Heart right ventricle (tissue), 16 donors: ENCODE measurements at regions of chr16 and their contacts with region 1.

Region 1: DNA sequence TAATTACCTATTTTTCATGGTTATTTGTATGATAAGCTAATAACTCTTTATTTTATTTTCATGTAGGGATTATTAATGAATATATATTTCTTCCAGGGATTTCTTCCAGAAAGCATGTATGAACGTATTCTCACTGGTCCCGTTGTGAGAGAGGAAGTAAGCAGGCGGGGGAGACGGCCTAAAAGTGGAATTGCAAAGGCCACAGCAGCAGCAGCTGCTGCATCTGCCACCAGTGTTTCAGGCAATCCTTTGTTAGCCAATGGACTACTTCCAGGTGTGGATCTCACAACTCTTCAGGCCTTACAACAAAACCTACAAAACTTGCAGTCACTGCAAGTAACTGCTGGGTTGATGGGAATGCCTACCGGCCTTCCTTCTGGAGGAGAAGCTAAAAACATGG is 110.3 kb upstream of the RBL2 start:
- DNase-seq: no peak
- ATAC-seq: no peak
- H3K4me3 ChIP-seq: no peak overlapping the region
- H3K27ac ChIP-seq: no peak overlapping the region
- H3K4me1 ChIP-seq: no peaks in the 10 kb centered on the region
- H3K27me3 ChIP-seq: no peaks in the 10 kb centered on the region
- CTCF ChIP-seq: no peak

Region 2: DNA sequence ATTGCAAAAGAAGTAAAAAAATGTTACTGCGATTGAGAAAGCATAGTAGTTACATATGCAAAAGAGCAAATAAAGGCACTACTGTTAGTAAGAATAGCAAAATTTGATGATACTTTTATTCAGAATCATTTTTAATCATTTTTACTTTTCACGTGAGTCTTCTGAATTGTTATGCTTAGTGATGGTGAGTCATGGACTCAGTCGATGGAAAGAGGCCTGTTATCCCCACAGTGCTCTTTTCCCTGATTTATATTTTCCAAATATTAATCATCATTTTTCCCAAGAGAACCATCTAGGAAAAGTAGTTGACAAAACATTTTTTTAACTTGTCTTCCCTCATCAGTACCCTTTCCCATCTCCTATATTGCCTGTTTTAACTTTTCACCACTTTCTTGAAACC is 88.1 kb before region 1 on chr16:
- intact Hi-C with region 1: loop called in 1 of 10 experiments (anchors 5 kb)
- DNase-seq: no peak
- ATAC-seq: no peak
- H3K4me3 ChIP-seq: no peak overlapping the region
- H3K27ac ChIP-seq: no peak overlapping the region
- H3K4me1 ChIP-seq: no peaks in the 10 kb centered on the region
- H3K27me3 ChIP-seq: no peaks in the 10 kb centered on the region
- CTCF ChIP-seq: no peak

Region 3: DNA sequence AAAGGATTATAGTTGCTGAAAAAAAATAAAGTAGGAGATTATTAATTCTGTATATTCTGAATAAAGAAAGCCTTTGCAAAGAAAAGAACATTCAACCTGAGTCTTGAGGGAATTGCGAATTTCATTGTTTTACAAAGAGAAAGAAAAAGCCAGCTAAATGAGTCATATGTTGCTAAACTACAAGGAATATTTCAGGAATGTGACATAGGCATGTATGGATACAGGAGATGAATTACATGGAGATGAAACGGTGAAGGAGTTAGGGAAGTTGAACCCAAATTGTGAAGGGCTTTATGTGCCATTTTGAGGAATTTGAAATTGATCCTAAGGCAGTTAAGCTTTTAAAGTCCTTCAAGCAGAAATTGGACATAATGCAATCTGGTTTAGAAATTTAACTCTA is 66.9 kb before region 1 on chr16:
- intact Hi-C with region 1: loop called in 1 of 10 experiments (anchors 10 kb)
- DNase-seq: no peak
- ATAC-seq: no peak
- H3K4me3 ChIP-seq: no peak overlapping the region
- H3K27ac ChIP-seq: no peak overlapping the region
- H3K4me1 ChIP-seq: no peaks in the 10 kb centered on the region
- H3K27me3 ChIP-seq: no peaks in the 10 kb centered on the region
- CTCF ChIP-seq: no peak

Region 4: DNA sequence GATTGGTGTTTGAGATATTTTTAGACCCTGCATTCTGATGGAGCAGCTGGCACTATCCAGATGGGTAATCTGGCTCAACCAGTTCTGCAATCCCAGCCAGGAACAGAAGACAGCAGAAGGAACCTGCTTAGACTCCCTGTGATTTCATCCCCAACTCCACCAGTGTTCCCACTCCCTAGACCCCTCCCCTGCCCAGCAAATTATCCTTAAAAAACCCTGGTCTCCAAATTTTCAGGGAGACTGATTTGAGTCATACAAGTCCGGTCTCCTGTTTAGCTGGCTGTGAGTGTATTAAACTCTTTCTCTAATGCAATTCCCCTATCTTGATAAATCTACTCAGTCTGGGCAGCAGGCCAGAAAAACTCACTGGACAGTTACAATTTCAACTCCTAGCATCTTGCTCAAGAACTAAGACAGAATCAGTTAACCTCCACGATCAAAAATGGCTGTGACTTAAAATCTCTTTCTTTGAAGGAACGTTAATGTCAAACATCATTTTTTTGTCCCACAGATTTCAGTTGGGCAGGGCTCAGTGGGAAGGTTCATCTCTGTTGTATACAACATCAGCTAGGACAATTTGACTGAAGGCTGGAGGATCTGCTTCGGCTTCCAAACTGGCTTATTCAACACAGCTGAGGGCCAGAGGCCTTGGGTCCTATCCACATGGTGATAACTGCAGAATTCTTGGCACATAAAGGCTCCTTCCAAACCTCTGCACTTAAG is 105.5 kb after region 1 on chr16:
- intact Hi-C with region 1: no loop called
- DNase-seq: no peak
- ATAC-seq: no peak
- H3K4me3 ChIP-seq: no peak overlapping the region
- H3K27ac ChIP-seq: no peak overlapping the region
- H3K4me1 ChIP-seq: peaks cover 0 to 5% (median 0%) of the 10 kb centered on the region in 9 donors
- H3K27me3 ChIP-seq: peaks cover 0 to 5% (median 0%) of the 10 kb centered on the region in 7 donors
- CTCF ChIP-seq: no peak

Region 5: GRCh38 chr16:53449632-53450517 is 126.0 kb after region 1 on chr16:
- intact Hi-C with region 1: loop called in 1 of 10 experiments (anchors 10 kb)
- DNase-seq: no peak
- ATAC-seq: no peak
- H3K4me3 ChIP-seq: no peak overlapping the region
- H3K27ac ChIP-seq: no peak overlapping the region
- H3K4me1 ChIP-seq: peaks cover 0 to 6% (median 0%) of the 10 kb centered on the region in 9 donors
- H3K27me3 ChIP-seq: no peaks in the 10 kb centered on the region
- CTCF ChIP-seq: no peak